AG04450 (cell line): ENCODE measurements at regions of chr11 and their contacts with region 1.

Region 1: GRCh38 chr11:9787981-9788521 is 124.2 kb downstream of the SWAP70 start:
- DNase-seq: peak; percentile 93
- H3K4me3 ChIP-seq: no peak overlapping the region
- H3K27ac ChIP-seq: peak overlapping the region; percentile 96
- H3K27me3 ChIP-seq: no peaks in the 10 kb centered on the region
- CTCF ChIP-seq: no peak

Region 2: DNA sequence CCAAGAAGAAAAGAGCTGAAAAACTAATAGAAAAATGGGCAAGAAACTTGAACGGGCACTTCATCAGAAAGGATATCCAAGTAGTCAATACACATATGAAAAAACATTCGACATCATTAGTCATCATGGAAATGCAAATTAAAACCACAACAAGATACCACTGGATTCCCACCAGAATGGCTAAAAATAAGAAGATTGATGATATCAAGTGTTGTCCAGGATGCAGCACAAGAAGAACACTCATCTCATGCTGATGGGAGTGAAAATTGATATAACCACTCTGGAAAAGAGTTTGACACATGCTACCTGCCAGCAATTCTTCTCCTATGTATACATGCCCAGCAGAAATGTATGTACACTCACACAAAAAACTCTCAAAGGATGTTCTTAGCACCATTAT is 669.8 kb before region 1 on chr11:
- CTCF ChIA-PET with region 1: no interaction called
- POLR2A ChIA-PET with region 1: no interaction called
- DNase-seq: no peak
- H3K4me3 ChIP-seq: no peak overlapping the region
- H3K27ac ChIP-seq: no peak overlapping the region
- H3K27me3 ChIP-seq: no peaks in the 10 kb centered on the region
- CTCF ChIP-seq: no peak

Region 3: DNA sequence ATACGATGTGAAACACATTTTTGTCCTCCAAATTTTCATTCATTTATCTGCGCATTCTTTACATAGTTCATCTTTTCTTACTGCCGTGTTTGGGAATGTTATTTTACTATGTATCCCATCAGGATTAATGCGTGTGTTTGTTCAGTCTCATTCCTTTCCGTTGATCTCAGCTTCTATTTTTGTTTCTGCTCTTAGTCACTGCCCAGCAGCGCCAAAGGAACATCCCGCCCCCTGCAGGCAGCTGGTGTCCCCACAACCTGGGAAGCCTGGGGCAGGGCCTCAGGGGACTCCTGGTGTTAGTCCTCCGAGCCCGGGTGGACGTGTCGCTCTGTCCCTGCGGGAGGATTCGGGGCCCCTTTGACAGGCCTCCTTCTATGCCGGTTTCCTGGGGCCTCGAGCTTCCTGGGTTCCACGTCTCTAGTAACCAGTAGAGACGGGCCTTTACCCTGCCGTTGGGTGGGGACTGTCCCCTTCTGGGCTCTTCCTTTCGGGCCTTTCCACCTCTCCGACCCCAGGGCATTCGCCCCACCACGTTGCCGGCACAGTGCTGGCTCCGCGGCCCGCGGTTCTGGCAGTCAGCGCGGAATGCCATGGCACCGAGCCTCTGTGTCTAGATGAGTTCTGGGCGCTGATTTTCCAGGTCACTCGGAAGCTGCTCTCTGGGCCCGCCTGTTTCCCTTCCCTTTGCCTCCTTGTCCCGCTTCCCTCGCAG is 174.8 kb before region 1 on chr11:
- CTCF ChIA-PET with region 1: no interaction called
- POLR2A ChIA-PET with region 1: interaction called, 10 read pairs
- DNase-seq: peak; percentile 97
- H3K4me3 ChIP-seq: peak overlapping the region; percentile 51
- H3K27ac ChIP-seq: peak overlapping the region; percentile 99
- H3K27me3 ChIP-seq: no peaks in the 10 kb centered on the region
- CTCF ChIP-seq: peak; percentile 96

Region 4: GRCh38 chr11:9757809-9758636 is 30.0 kb before region 1 on chr11:
- CTCF ChIA-PET with region 1: interaction called, 7 read pairs
- POLR2A ChIA-PET with region 1: interaction called, 33 read pairs
- DNase-seq: no peak
- H3K4me3 ChIP-seq: peak overlapping the region; percentile 45
- H3K27ac ChIP-seq: peak overlapping the region; percentile 95
- H3K27me3 ChIP-seq: no peaks in the 10 kb centered on the region
- CTCF ChIP-seq: peak; percentile 51

Region 5: DNA sequence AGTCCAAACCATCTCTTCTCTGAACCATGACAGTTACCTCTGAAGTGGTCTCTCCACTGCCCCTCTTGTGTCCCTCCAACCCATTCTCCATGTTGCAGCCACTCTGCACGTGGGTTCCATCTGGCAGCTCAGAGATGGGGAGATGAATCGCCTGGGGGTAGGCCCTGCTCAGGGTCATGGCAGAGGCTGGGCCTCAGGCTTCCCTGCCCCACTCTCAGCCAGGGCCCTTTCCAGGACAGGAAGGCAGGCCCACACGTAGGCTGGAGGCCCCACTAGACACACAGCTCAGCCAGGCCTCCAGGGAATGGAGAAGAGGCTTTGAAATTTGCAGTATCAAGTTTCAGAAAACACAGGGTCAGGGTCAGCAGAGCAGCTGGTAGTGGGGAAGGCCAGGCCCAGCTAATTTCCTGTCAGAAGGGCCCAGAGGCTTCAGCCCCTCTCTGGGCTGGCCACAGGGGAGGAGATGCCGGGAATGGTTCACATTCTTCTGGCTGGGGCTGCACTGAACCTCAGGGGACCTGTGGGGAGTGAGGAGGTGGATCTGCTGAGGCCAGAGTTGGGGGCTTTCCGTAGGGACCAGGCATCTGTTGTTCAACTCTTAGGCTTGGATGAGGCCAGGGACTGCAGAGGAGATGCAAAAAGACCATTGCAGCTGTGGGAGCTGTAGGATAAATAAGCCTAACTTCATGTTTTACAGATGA is 22.6 kb before region 1 on chr11:
- CTCF ChIA-PET with region 1: no interaction called
- POLR2A ChIA-PET with region 1: interaction called, 33 read pairs
- DNase-seq: peak; percentile 90
- H3K4me3 ChIP-seq: no peak overlapping the region
- H3K27ac ChIP-seq: peak overlapping the region; percentile 99
- H3K27me3 ChIP-seq: no peaks in the 10 kb centered on the region
- CTCF ChIP-seq: no peak

Region 6: GRCh38 chr11:9802291-9802861 is 14.3 kb after region 1 on chr11:
- CTCF ChIA-PET with region 1: no interaction called
- POLR2A ChIA-PET with region 1: interaction called, 14 read pairs
- DNase-seq: peak; percentile 70
- H3K4me3 ChIP-seq: no peak overlapping the region
- H3K27ac ChIP-seq: peak overlapping the region; percentile 92
- H3K27me3 ChIP-seq: no peaks in the 10 kb centered on the region
- CTCF ChIP-seq: no peak

Region 7: GRCh38 chr11:9859554-9860305 is 71.7 kb after region 1 on chr11:
- CTCF ChIA-PET with region 1: no interaction called
- POLR2A ChIA-PET with region 1: interaction called, 10 read pairs
- DNase-seq: no peak
- H3K4me3 ChIP-seq: no peak overlapping the region
- H3K27ac ChIP-seq: no peak overlapping the region
- H3K27me3 ChIP-seq: no peaks in the 10 kb centered on the region
- CTCF ChIP-seq: no peak